ENCODE measurements at regions of chr1 and their contacts with region 1.

Region 1: DNA sequence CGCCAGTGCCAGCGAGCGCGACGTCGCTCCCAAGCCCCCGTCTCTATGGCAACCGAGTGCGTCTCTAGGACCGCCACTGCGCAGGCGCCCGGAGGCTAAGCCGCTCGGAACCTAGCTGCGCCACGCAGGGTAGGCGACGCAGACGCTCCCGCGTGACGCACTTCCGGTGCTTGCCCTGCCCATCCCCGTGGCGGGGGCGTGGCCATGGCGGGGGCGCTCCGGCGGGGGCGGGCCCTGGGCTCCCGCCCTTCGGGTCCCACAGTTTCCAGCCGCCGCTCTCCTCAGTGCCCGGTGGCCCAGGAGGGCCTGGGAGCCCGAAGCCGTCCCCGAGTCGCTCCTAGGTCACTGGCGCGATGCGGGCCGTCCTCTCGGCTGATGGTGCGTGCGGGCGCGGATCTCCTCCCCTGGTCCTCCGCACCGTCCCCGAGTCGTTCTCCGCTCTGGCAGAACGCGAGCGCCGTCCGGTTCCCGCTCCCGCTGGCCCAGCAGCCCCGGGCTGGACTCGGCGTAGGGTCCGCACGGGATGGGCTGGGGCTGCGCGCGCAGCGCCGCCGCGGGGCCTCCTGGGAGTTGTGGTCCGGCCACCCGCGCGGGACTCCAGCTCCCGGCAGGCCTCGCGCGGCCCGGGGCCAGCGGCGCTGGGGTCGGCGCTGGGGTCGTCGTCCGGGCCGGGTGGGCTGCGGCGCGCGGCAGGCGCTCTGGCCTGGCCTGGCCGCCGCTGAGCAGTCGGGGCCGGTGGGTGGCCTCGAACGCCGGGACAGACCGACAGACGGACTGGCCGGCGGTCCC is at the start of gene MIB2:
- DNase-seq: peak; percentile 100
- ATAC-seq: peak; percentile 86
- H3K4me3 Mint-ChIP-seq: peak within 1 kb of the TSS; percentile 89
- H3K27ac Mint-ChIP-seq: peak within 1 kb of the TSS; percentile 90
- H3K4me1 Mint-ChIP-seq: peaks cover 19% of the 10 kb centered on the region
- H3K27me3 Mint-ChIP-seq: no peaks in the 10 kb centered on the region
- total RNA-seq, gene MIB2: 72.6 to 75.2 TPM

Region 2: GRCh38 chr1:1374929-1375662 is 240.4 kb before region 1 on chr1 and contains the start of gene AURKAIP1:
- POLR2A ChIA-PET with region 1: interaction called, 13 read pairs
- DNase-seq: peak; percentile 89
- ATAC-seq: peak; percentile 87
- H3K4me3 Mint-ChIP-seq: peak within 1 kb of the TSS; percentile 91
- H3K27ac Mint-ChIP-seq: peak within 1 kb of the TSS; percentile 95
- H3K4me1 Mint-ChIP-seq: peaks cover 13% of the 10 kb centered on the region
- H3K27me3 Mint-ChIP-seq: no peaks in the 10 kb centered on the region
- total RNA-seq, gene AURKAIP1: 87.3 to 97.1 TPM

Region 3: DNA sequence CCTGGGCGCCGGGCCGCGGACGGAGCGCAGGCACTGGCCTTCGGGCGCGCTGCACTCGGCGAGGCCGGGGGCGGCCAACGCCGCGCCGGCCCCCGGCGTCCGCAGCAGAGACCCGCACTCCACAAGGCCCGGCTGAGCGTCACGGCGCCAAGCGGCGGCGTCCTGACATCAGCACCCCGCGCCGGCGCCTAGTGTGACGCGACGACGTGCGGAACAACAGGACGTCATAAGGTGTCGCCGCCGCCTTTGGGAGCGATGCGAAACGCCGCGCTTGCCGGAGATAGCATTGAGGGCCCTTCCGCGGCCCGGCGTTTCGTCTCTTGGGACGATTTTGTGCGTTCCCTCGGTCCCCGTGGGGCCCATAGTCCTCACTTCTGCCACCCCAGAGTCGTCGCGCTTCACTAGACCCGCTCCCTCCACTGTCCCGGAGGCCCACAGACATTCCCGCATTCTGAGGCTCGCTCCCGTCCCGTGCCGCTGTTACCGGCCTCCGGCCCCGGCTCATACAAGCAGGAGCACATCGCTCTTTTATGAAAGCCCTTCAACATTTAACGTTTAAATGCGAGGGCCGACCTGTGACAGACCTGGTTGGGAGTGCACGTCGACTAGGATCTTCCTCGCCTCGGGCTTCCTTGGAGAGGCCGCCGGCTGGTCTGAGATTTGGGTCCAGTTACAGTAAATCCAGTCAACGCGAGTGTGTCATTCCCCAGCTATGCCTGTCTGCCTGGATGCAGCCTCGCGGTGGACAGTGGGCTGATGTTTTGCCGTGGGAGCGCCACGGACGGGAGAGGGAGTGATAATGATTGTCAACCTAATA is 40.5 kb before region 1 on chr1 and contains the start of gene SSU72:
- POLR2A ChIA-PET with region 1: interaction called, 12 read pairs
- DNase-seq: peak; percentile 97
- ATAC-seq: peak; percentile 91
- H3K4me3 Mint-ChIP-seq: peak within 1 kb of the TSS; percentile 97
- H3K27ac Mint-ChIP-seq: peak within 1 kb of the TSS; percentile 100
- H3K4me1 Mint-ChIP-seq: peaks cover 16% of the 10 kb centered on the region
- H3K27me3 Mint-ChIP-seq: no peaks in the 10 kb centered on the region
- total RNA-seq, gene SSU72: 118 TPM

Region 4: GRCh38 chr1:1605034-1605591 is 10.3 kb before region 1 on chr1:
- POLR2A ChIA-PET with region 1: interaction called, 10 read pairs
- DNase-seq: no peak
- ATAC-seq: no peak
- H3K4me3 Mint-ChIP-seq: no peak overlapping the region
- H3K27ac Mint-ChIP-seq: peak overlapping the region; percentile 32
- H3K4me1 Mint-ChIP-seq: peaks cover 8% of the 10 kb centered on the region
- H3K27me3 Mint-ChIP-seq: peaks cover 3% of the 10 kb centered on the region

Region 5: GRCh38 chr1:1630271-1630964 is 15.0 kb after region 1 on chr1:
- POLR2A ChIA-PET with region 1: interaction called, 76 read pairs
- DNase-seq: peak; percentile 97
- ATAC-seq: peak; percentile 73
- H3K4me3 Mint-ChIP-seq: peak overlapping the region; percentile 82
- H3K27ac Mint-ChIP-seq: peak overlapping the region; percentile 95
- H3K4me1 Mint-ChIP-seq: peaks cover 2% of the 10 kb centered on the region
- H3K27me3 Mint-ChIP-seq: peaks cover 7% of the 10 kb centered on the region

Region 6: DNA sequence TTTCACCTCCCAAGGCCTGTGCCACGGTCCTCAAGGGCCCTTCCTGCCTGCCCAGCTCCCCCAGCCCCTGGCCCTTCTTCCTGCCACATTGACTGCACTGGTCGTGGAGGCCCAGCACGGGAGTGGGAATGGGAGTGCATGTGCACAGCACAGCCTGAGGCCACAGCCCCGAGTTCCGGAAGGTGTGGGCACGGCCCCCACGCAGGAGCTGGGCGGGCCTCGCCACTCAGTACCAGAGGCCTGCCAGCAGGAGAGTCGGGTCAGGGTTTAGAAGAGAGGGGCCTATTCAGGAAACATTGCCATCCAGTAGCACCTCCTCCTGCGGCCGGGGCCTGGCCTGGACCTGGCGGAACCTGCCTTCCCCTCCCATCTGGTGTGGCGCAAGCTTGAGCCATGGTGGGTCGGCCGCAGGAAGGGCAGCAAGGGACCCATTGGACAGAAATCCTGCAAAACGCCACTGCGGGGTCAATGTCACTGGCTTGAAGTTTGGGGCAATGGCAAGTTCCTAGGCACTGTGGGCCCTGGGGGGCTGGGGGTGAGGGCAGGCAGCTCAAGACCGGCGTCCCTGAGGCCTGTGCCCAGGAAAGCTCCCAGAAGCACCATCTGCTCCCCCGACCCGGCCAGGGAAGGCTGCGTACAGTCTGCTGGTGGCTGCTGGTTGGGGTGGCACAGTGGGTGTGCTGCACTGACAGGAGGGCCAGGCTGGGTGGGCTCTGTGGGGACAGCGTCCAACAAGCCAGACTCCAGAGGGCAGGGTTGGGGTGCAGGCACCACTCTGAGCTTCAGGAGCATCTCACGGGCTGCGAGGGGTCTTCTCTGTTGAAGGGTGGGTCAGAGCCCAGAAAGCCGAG is 305.4 kb after region 1 on chr1:
- POLR2A ChIA-PET with region 1: no interaction called
- DNase-seq: no peak
- ATAC-seq: no peak
- H3K4me3 Mint-ChIP-seq: no peak overlapping the region
- H3K27ac Mint-ChIP-seq: peak overlapping the region; percentile 42
- H3K4me1 Mint-ChIP-seq: no peaks in the 10 kb centered on the region
- H3K27me3 Mint-ChIP-seq: no peaks in the 10 kb centered on the region

Measured in activated naive CD8-positive, alpha-beta T cell treated with anti-CD3 and anti-CD28 coated beads, Interleukin-2, amount 10 ng/mL, durations not matched to agents 7 days and 5 days (primary cell).